ENCODE measurements at regions of chr4 and their contacts with region 1.

Region 1: GRCh38 chr4:153127760-153128494 is 76.3 kb upstream of the TRIM2 start:
- DNase-seq: peak; percentile 88 to 92 (median 88)
- ATAC-seq: peak; percentile 92
- H3K4me3 ChIP-seq: no peak overlapping the region
- H3K27ac ChIP-seq: no peak overlapping the region
- H3K4me1 ChIP-seq: no peaks in the 10 kb centered on the region
- H3K27me3 ChIP-seq: no peaks in the 10 kb centered on the region
- CTCF ChIP-seq: peak; percentile 77 to 87 (median 83)
- POLR2A ChIP-seq: no peak

Region 2: DNA sequence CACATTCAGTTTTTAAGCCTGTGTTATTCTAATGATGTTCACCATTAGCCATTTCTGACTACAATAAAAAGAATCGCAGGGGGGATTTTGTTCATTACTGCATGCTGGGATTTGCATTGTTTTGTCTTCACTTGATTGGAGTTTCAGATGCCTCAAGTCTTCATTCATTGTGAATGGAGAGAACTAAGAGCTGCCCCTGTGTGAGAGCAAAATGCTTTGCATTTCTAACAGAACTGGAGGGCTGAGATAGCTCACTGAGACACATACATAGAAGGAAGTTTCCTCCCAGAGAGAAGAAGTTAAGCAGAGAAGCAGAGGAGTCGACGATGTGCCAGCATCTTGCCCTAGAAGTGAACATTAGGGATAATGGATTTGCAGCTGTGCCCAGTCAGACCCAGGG is 1253.6 kb before region 1 on chr4:
- intact Hi-C with region 1: no loop called
- DNase-seq: no peak
- ATAC-seq: no peak
- H3K4me3 ChIP-seq: no peak overlapping the region
- H3K27ac ChIP-seq: no peak overlapping the region
- H3K4me1 ChIP-seq: no peaks in the 10 kb centered on the region
- H3K27me3 ChIP-seq: no peaks in the 10 kb centered on the region
- CTCF ChIP-seq: no peak
- POLR2A ChIP-seq: no peak

Region 3: GRCh38 chr4:152849350-152849749 is 278.6 kb before region 1 on chr4:
- intact Hi-C with region 1: loop called (anchors 5 kb)
- DNase-seq: no peak
- ATAC-seq: no peak
- H3K4me3 ChIP-seq: no peak overlapping the region
- H3K27ac ChIP-seq: no peak overlapping the region
- H3K4me1 ChIP-seq: no peaks in the 10 kb centered on the region
- H3K27me3 ChIP-seq: no peaks in the 10 kb centered on the region
- CTCF ChIP-seq: no peak
- POLR2A ChIP-seq: no peak

Region 4: DNA sequence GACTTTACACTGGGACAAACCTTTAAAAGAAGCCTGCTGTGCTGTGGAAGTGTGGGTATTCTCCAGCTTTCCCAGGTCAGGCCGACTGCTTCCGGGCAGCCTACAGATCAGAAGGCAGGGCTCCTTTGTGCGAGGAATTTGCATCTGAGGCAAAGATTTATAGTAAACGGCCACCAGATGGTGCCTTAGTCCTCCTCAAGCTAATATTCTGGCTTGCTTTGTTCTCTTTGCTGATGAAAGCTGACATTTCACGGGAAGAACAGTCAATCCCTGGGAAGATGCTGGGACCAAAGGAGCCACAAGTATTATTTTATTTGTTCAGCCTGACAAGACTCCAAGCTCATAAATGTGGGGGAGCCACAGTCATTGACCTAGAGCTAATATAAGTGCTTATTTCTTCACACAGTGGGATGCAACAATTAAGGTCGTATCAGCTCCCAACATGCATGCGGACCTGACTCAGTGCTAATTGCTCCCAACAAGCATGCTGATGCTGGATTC is 44.4 kb before region 1 on chr4:
- intact Hi-C with region 1: loop called (anchors 5 kb)
- DNase-seq: peak; percentile 63 to 80 (median 74)
- ATAC-seq: peak; percentile 85
- H3K4me3 ChIP-seq: no peak overlapping the region
- H3K27ac ChIP-seq: no peak overlapping the region
- H3K4me1 ChIP-seq: peaks cover 11% of the 10 kb centered on the region
- H3K27me3 ChIP-seq: no peaks in the 10 kb centered on the region
- CTCF ChIP-seq: peak; percentile 11 to 77 (median 61)
- POLR2A ChIP-seq: no peak